Activated CD4-positive, alpha-beta memory T cell treated with anti-CD3 and anti-CD28 coated beads for 36 hours (primary cell): ENCODE measurements at regions of chr19 and their contacts with region 1.

Region 1: DNA sequence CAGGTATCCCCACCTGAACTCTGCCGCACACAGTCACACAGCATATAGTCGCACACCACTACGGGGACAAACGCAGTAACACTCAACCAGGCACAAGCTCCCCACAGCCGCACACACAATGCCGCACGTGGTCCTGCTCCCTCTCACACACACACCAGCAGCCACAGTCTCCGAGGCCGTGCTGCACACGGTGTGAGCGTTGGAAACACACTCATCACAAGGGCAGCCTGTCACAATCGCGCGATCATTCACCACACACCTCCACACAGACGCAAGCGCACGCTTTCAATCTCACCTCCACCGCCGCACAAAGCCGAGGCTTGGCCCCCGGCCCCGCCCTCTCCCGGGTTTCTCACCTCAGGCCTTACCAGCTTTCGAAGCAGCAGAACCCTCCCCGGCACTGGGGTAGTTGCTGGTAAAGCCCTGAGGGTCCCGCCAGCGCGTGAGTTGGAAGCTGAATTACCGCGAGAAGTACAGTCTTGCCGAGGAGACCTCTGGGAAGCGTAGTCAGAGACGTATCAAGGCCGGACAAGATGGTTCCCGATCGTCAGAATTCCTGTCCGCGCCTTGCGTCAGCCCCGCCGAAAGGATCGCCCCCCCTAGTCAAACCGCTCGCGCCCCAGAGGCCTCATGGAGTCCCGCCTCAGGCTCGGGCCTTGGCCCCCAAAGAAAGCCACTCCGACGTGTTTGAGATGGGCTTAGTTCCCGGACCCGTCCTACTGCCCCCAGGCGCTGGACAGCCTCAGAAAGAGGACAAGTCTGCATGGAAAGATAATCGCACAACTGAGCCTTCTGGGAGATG is at the start of gene ZNF566:
- DNase-seq: peak; percentile 96
- H3K4me3 Mint-ChIP-seq: peak within 1 kb of the TSS; percentile 95
- H3K27ac Mint-ChIP-seq: peak within 1 kb of the TSS; percentile 99
- H3K4me1 Mint-ChIP-seq: peaks cover 23% of the 10 kb centered on the region
- H3K27me3 Mint-ChIP-seq: no peaks in the 10 kb centered on the region
- total RNA-seq, gene ZNF566: 3.8 to 4.6 TPM

Region 2: DNA sequence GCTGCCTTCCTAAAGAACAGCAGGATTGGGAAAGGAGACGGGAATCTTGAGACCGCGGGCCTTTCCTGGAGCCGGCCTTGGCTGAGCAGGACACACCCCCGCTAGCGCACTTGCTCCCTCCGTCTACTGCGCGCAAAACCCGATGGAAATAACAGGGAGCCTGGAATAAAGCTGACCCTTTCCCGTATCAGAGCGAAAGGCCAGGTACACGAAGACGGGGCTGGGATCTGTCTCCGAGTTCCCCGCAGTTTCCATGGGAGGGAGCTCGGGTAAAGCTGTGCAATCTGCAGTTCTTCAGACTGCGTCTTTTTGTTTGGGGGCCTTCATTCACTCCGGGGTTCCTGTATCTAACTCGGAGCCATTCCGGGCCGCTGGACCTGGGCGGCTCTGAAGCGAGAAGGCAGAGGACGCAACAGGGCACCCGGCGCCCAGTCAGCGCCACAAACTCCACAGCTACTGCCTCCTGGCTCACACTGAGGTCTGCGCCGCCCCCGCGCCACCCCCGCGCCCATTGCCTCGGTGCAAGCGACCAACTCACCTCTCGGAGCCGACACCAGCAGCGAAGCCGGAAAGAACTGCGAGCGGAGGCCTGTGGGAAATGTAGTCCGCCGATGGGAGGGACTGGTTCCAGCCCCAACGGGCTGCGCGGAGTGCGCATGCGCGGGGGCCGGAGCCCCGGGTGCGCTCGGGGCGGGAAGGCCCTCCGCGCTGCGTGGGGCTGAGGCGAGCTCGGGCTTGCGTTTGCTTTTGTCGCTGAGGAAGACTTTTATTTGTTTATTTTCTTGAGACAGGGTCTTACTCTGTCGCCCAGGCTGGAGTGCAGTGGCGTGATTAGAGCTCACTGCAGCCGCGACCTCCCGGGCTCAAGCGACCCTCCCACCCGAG is 110.5 kb before region 1 on chr19 and contains the start of gene ZFP14:
- CTCF ChIA-PET with region 1: interaction called, 6 read pairs
- POLR2A ChIA-PET with region 1: no interaction called
- intact Hi-C with region 1: loop called (anchors 1 kb)
- DNase-seq: peak; percentile 97
- H3K4me3 Mint-ChIP-seq: peak within 1 kb of the TSS; percentile 91
- H3K27ac Mint-ChIP-seq: peak within 1 kb of the TSS; percentile 86
- H3K4me1 Mint-ChIP-seq: peaks cover 10% of the 10 kb centered on the region
- H3K27me3 Mint-ChIP-seq: no peaks in the 10 kb centered on the region
- total RNA-seq, gene ZFP14: 1.6 to 2.3 TPM

Region 3: GRCh38 chr19:36573020-36573885 is 83.9 kb after region 1 on chr19 and contains the start of gene ZNF529:
- CTCF ChIA-PET with region 1: no interaction called
- POLR2A ChIA-PET with region 1: interaction called, 12 read pairs
- intact Hi-C with region 1: loop called (anchors 1 kb)
- DNase-seq: peak; percentile 92
- H3K4me3 Mint-ChIP-seq: peak within 1 kb of the TSS; percentile 87
- H3K27ac Mint-ChIP-seq: peak within 1 kb of the TSS; percentile 92
- H3K4me1 Mint-ChIP-seq: peaks cover 32% of the 10 kb centered on the region
- H3K27me3 Mint-ChIP-seq: no peaks in the 10 kb centered on the region
- total RNA-seq, gene ZNF529: 14.3 to 15.4 TPM

Region 4: GRCh38 chr19:36665832-36666231 is 176.5 kb after region 1 on chr19:
- CTCF ChIA-PET with region 1: no interaction called
- POLR2A ChIA-PET with region 1: interaction called, 3 read pairs
- intact Hi-C with region 1: loop called (anchors 2 kb)
- DNase-seq: no peak
- H3K4me3 Mint-ChIP-seq: peak overlapping the region; percentile 94
- H3K27ac Mint-ChIP-seq: peak overlapping the region; percentile 61
- H3K4me1 Mint-ChIP-seq: peaks cover 28% of the 10 kb centered on the region
- H3K27me3 Mint-ChIP-seq: no peaks in the 10 kb centered on the region

Region 5: DNA sequence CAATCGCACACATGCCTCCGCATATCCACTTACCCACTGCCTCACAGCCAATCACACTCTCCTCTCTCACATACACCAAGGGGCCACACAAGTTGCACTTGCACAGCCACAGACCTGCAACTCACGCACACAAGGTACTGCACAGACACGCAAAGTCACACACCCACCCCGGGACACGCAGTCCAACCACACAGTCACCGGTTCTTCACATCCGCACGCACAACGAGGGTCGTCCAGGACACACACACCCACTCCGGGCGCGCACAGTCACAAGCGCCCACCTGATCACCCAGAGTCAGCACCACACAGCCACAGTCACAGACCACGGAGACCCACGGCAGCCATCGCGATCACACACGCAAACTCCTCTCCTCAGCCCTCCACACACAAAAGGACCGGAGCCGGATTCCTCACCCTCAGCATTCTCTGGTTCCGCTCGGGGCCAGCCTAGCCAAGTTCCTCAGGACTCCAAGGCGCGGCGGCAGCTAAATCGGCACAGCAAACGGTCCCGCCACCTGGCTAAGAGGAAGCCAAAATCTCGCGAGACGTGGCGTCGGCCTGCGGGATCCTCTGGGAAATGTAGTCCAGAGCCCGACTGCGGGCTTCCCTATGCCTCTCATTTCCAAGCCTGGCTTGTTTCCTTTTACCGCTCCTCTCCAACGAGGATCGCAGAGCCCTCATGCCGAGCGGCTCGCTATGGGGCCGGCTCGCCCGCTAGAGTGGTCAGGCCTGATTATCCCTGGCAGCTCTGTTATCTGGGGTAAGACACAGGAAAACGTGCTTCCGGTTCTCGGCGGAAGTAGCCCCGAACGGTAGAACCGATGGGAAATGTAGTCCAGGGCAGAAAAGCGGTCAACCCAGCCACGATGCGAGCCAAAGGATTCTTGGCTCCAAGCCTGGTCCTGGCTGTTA is 283.2 kb after region 1 on chr19 and contains the start of gene ZNF850:
- CTCF ChIA-PET with region 1: no interaction called
- POLR2A ChIA-PET with region 1: no interaction called
- intact Hi-C with region 1: loop called (anchors 1 kb)
- DNase-seq: peak; percentile 95
- H3K4me3 Mint-ChIP-seq: peak within 1 kb of the TSS; percentile 91
- H3K27ac Mint-ChIP-seq: peak within 1 kb of the TSS; percentile 83
- H3K4me1 Mint-ChIP-seq: peaks cover 21% of the 10 kb centered on the region
- H3K27me3 Mint-ChIP-seq: no peaks in the 10 kb centered on the region
- total RNA-seq, gene ZNF850: 6.7 TPM